GM12878 (cell line): ENCODE measurements at regions of chr17 and their contacts with region 1.

Region 1: DNA sequence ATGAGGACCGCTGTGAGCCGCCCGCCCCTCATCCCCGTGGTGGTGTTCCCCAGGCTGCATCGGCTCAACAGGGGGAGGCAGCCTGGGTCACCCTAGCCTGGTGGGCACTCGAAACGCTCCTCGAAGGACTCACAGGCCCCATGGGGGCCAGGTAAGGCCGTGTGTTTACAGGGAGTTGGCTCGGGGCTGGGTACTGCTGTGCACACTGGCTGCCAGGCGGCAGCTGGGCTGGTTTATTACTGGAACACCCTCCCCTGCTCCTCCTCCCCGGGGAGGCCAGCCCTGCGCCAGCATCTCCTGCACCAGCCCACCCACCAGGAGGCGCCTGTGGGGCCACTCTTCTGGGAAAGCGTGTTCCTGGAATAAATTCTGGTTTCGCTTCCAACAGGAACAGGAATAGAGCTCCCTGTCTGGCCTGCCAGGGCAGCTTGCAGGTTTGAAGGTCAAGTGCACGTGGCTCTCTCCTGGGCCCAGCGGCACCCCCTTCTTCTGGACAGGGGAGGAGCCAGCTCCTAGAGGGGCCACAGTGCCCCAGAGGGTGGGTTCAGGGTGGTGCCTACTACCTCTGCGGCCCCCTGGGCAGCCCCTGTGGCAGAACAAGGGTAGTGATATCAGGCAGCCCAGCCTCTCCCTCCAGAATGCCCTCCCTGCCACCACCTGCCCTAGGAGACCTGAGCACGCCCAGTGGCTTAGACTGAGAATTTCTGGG is 11.3 kb downstream of the MCRIP1 start:
- DNase-seq: no peak
- ATAC-seq: peak; percentile 48; the same call in 2 of the 3 replicates
- H3K4me3 ChIP-seq: no peak overlapping the region
- H3K27ac ChIP-seq: no peak overlapping the region
- H3K4me1 ChIP-seq: no peaks in the 10 kb centered on the region
- H3K27me3 ChIP-seq: no peaks in the 10 kb centered on the region
- CTCF ChIP-seq: 0 out of 6 replicates have a peak, but pooled peaks of 2 of the 3 experiments have one; percentile 12 to 20
- EP300 ChIP-seq: no peak
- POLR2A ChIP-seq: 0 out of 2 replicates have a peak, but pooled peaks have one; percentile 5
- RAD21 ChIP-seq: no peak

Region 2: DNA sequence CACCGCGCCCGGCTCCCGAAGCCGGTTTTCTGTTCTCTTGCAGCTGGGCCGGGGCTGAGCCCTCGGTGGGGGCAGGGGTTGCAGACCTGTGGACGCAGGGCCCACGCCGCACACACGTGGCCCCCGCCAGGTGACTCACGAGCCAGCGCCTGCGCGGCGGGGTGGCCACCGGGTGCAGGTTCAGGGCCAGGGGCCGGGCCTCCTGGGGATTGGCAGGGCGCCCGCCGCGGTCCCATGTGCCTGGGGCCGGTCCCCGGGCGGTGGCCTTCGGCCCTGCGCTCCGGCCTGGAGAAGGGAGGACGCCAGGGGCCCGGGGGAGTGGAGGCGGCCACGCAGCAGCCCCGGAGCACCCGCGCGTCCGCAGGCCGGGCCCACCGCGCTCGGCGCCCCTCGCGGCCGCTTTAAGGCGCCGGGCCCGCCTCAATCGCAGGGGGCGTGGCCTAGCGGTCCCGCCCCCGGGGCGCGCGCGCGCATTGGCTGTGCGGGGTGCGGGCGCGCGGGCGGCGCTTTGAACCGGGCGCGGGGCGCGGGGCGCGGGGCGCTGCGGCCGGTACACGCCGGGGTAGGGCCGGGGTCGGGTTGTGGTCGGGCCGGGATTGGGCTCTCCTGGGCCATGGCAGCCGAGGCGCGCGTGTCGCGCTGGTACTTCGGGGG is 109.8 kb before region 1 on chr17 and contains the start of gene SLC25A10:
- CTCF ChIA-PET with region 1: no interaction called
- POLR2A ChIA-PET with region 1: no interaction called
- RAD21 ChIA-PET with region 1: no interaction called
- SMC1A ChIA-PET with region 1: no interaction called
- in situ Hi-C with region 1: loop called (anchors 5 kb)
- intact Hi-C with region 1: no loop called
- DNase-seq: no peak
- ATAC-seq: peak; percentile 84
- H3K4me3 ChIP-seq: peak within 1 kb of the TSS; percentile 89
- H3K27ac ChIP-seq: peak within 1 kb of the TSS; percentile 69
- H3K4me1 ChIP-seq: peaks cover 18% of the 10 kb centered on the region
- H3K27me3 ChIP-seq: no peaks in the 10 kb centered on the region
- CTCF ChIP-seq: no peak
- EP300 ChIP-seq: no peak
- POLR2A ChIP-seq: no peak; the same call in 1 of the 2 replicates
- RAD21 ChIP-seq: no peak
- polyA plus RNA-seq, gene SLC25A10: 0.11 to 1.4 TPM

Region 3: DNA sequence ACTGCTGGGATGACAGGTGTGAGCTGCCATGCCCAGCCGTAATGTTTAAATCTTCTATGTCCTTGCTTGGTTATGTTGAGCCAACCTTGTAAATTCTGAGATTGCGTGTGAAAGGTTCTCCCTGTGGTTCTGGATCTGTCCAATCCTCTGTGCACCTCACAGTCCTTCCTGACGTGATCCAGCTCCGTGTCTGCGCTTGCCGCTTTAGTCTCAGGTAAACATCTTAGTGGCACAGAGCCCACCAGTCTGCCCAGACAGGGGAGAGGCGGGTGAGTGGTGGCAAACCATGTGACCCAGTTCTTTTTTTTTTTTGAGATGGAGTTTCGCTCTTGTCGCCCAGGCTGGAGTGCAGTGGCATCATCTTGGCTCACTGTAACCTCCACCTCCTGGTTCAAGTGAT is 95.8 kb before region 1 on chr17:
- CTCF ChIA-PET with region 1: no interaction called
- POLR2A ChIA-PET with region 1: no interaction called
- RAD21 ChIA-PET with region 1: no interaction called
- SMC1A ChIA-PET with region 1: no interaction called
- in situ Hi-C with region 1: no loop called
- intact Hi-C with region 1: no loop called
- DNase-seq: no peak
- ATAC-seq: no peak
- H3K4me3 ChIP-seq: no peak overlapping the region
- H3K27ac ChIP-seq: no peak overlapping the region
- H3K4me1 ChIP-seq: no peaks in the 10 kb centered on the region; the same call in 1 of the 2 replicates
- H3K27me3 ChIP-seq: no peaks in the 10 kb centered on the region
- CTCF ChIP-seq: no peak
- EP300 ChIP-seq: no peak
- POLR2A ChIP-seq: no peak
- RAD21 ChIP-seq: no peak

Region 4: DNA sequence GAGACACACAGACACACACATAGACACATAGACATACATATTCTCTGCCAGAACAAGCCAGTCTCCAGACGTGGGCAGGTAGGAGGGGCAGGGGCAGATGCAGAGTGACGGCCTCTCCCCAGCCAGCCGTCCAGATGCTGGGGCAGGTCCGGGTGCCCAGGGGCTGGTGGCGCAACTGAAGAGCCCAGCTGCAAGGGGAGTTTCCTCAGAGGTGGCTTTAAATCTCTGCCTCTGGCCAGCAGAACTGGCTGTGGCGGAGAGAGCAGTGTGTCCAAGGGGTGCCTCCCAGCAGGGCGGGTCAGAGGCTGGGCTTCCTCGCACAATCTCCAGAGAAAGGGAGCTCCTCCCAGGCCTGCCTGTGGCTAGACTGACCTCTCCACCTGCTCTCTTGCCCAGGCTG is 27.2 kb before region 1 on chr17:
- CTCF ChIA-PET with region 1: no interaction called
- POLR2A ChIA-PET with region 1: no interaction called
- RAD21 ChIA-PET with region 1: no interaction called
- SMC1A ChIA-PET with region 1: no interaction called
- in situ Hi-C with region 1: no loop called
- intact Hi-C with region 1: no loop called
- DNase-seq: no peak
- ATAC-seq: no peak; the same call in 1 of the 3 replicates
- H3K4me3 ChIP-seq: no peak overlapping the region
- H3K27ac ChIP-seq: no peak overlapping the region
- H3K4me1 ChIP-seq: no peaks in the 10 kb centered on the region
- H3K27me3 ChIP-seq: no peaks in the 10 kb centered on the region
- CTCF ChIP-seq: no peak
- EP300 ChIP-seq: no peak
- POLR2A ChIP-seq: no peak
- RAD21 ChIP-seq: no peak

Region 5: GRCh38 chr17:81977211-81978027 is 155.7 kb after region 1 on chr17 and contains the start of gene ASPSCR1:
- CTCF ChIA-PET with region 1: no interaction called
- POLR2A ChIA-PET with region 1: no interaction called
- RAD21 ChIA-PET with region 1: no interaction called
- SMC1A ChIA-PET with region 1: no interaction called
- in situ Hi-C with region 1: no loop called
- intact Hi-C with region 1: no loop called
- DNase-seq: peak; percentile 34
- ATAC-seq: peak; percentile 90
- H3K4me3 ChIP-seq: peak within 1 kb of the TSS; percentile 87
- H3K27ac ChIP-seq: peak within 1 kb of the TSS; percentile 87
- H3K4me1 ChIP-seq: peaks cover 14% of the 10 kb centered on the region
- H3K27me3 ChIP-seq: no peaks in the 10 kb centered on the region
- CTCF ChIP-seq: no peak
- EP300 ChIP-seq: no peak; a peak in 1 of 4 replicates
- POLR2A ChIP-seq: peak; percentile 88
- RAD21 ChIP-seq: no peak
- polyA plus RNA-seq, gene ASPSCR1: 1.5 to 7.2 TPM